ENCODE measurements at regions of chr9 and their contacts with region 1.

Region 1: DNA sequence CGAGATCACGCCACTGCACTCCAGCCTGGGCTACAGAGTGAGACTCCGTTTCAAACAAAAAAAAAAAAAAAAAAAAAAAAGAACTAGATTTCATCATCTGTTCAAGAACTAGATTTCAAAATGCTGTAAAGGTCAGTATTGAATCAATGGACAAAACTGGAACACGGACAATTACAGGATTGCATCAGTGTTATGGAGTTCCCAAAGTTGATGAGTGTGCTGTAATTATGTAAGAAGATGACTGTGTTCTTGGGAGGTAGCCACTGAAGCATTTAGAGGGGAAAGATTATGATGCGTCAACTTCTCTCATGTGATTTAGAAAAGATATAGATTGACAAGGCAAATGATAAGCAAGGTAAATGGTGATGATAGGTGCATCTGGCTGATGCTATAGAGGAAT is 6.5 kb downstream of the FAM240B start:
- DNase-seq: no peak
- ATAC-seq: peak in 7 of 8 donors; percentile 17 to 88 (median 75)
- H3K4me3 ChIP-seq: no peak overlapping the region
- H3K27ac ChIP-seq: no peak overlapping the region
- H3K4me1 ChIP-seq: peaks cover 0 to 5% (median 0%) of the 10 kb centered on the region in 9 donors
- H3K27me3 ChIP-seq: peaks cover 0 to 3% (median 0%) of the 10 kb centered on the region in 7 donors
- CTCF ChIP-seq: no peak

Region 2: DNA sequence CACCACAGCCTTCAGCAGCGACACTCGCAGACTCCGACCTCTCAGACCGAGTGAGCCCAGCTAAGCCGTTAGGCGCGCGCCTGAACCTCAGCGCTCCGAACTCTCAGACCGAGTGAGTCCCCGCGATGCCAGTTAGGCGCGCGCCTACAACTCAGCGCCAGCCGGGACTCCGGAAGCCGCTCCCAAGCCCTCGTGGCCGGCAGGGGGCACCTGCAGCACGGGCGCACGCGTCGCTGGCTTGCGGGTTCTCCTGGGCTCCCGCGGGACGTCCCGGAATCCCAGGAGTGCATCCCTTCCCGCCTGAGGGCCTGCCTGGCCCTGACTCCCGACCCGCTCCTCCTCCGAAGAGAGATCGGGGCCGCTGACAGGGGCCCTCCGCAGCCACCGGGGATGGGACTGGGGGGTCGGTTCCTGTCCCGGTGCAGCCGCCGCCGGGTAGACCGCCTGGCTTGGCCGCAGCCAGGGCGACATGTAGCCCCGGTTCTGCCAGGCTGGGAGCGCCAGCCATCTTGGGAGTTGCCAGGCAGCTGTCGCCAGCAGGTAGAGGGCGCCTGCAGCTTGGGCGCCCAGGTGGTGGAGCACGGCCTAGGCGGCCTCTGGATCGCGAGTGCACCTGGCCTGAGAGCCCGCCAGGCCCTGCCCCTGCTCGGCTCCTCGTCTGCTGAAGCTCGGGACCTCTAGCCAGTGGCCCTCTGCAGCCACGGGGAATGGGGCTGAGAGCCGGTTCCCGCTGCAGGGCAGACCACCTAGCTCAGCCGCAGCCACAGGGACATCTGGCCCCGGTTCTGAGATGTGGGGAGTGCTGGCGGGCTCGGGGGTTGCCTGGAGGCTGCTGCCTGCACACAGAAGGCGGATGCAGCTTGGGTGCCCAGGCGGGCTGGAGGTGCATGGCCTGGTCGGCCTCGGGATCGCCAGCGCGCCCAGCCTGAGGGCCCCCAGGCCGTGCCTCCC is 92.7 kb before region 1 on chr9 and contains the start of gene ANKRD18A:
- intact Hi-C with region 1: no loop called
- DNase-seq: peak; percentile 42 to 69
- ATAC-seq: peak; percentile 75 to 92 (median 87)
- H3K4me3 ChIP-seq: peak within 1 kb of the TSS; percentile 25 to 62 (median 52)
- H3K27ac ChIP-seq: peak within 1 kb of the TSS in 5 of 10 donors; percentile 4 to 45 (median 41)
- H3K4me1 ChIP-seq: peaks cover 0 to 32% (median 22%) of the 10 kb centered on the region in 9 donors
- H3K27me3 ChIP-seq: peaks cover 8 to 88% (median 79%) of the 10 kb centered on the region in 7 donors
- CTCF ChIP-seq: peak; percentile 3 to 58 (median 48)
- total RNA-seq, gene ANKRD18A: 0.22 to 5.5 (median 3.1) TPM

Region 3: GRCh38 chr9:38662763-38663593 is 50.4 kb before region 1 on chr9:
- intact Hi-C with region 1: loop called in 2 of 10 experiments (anchors 10 kb)
- DNase-seq: no peak
- ATAC-seq: no peak
- H3K4me3 ChIP-seq: no peak overlapping the region
- H3K27ac ChIP-seq: no peak overlapping the region
- H3K4me1 ChIP-seq: no peaks in the 10 kb centered on the region
- H3K27me3 ChIP-seq: no peaks in the 10 kb centered on the region
- CTCF ChIP-seq: peak in 5 of 9 donors; percentile 8 to 49 (median 47)